Gastrocnemius medialis (tissue), 4 donors: ENCODE measurements at regions of chr15 and their contacts with region 1.

Region 1: DNA sequence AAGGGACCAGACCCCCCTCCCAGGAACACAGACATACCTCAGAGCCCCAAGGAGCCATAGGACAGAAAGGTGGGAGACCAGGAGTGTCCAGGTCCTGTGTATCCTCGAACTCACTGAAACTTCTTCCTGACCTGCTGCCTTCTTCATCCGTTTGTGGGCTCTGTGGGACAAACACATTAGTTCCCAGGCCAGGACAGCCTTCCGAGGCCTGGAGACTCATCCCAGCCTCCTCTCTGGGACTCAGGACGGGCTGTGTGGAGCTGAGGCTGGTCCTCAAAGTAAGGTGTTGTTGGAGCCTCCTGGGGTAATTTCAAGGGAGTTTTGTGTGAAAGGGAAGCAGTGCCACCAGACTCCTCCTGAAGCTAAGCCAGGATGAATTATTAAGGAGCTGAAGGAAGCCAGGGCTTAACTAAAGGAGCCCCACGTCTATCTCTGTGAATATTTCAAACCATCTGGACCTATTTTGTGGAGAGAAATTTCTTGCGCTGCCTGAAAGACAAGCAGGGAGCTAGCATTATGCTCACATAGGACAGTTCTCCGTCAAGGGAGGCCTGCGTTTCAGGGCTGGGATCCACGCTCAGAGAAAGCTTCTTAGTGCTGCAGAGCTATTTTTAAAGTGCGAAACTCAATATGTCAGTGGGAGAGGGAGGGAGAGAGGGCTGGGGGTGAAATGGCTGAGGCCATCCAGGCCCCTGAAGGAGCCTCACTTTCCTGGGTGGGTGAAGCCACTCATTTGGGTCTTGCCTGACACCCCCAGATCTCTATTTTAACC is 29.8 kb upstream of the PLA2G4E start:
- DNase-seq: peak in 1 of 2 donors; percentile 48
- ATAC-seq: peak; percentile 94 to 95
- H3K4me3 ChIP-seq: no peak overlapping the region
- H3K27ac ChIP-seq: peak overlapping the region; percentile 73 to 88 (median 82)
- H3K4me1 ChIP-seq: peaks cover 40 to 47% of the 10 kb centered on the region in 2 donors
- H3K27me3 ChIP-seq: no peaks in the 10 kb centered on the region
- CTCF ChIP-seq: no peak
- POLR2A ChIP-seq: no peak

Region 2: GRCh38 chr15:42031198-42031915 is 19.3 kb before region 1 on chr15:
- in situ Hi-C with region 1: no loop called
- intact Hi-C with region 1: loop called (anchors 2 kb)
- DNase-seq: no peak
- ATAC-seq: peak in 1 of 2 donors; percentile 77
- H3K4me3 ChIP-seq: no peak overlapping the region
- H3K27ac ChIP-seq: peak overlapping the region in 2 of 4 donors; percentile 68 to 72
- H3K4me1 ChIP-seq: peaks cover 32 to 39% of the 10 kb centered on the region in 2 donors
- H3K27me3 ChIP-seq: no peaks in the 10 kb centered on the region
- CTCF ChIP-seq: no peak
- POLR2A ChIP-seq: no peak